ENCODE measurements at regions of chr15 and their contacts with region 1.

Region 1: GRCh38 chr15:45705510-45706473 is 71.0 kb downstream of the SQOR start:
- DNase-seq: peak; percentile 66
- H3K4me3 ChIP-seq: peak overlapping the region; percentile 50
- H3K27ac ChIP-seq: no peak overlapping the region
- H3K27me3 ChIP-seq: no peaks in the 10 kb centered on the region
- CTCF ChIP-seq: peak; percentile 88

Region 2: DNA sequence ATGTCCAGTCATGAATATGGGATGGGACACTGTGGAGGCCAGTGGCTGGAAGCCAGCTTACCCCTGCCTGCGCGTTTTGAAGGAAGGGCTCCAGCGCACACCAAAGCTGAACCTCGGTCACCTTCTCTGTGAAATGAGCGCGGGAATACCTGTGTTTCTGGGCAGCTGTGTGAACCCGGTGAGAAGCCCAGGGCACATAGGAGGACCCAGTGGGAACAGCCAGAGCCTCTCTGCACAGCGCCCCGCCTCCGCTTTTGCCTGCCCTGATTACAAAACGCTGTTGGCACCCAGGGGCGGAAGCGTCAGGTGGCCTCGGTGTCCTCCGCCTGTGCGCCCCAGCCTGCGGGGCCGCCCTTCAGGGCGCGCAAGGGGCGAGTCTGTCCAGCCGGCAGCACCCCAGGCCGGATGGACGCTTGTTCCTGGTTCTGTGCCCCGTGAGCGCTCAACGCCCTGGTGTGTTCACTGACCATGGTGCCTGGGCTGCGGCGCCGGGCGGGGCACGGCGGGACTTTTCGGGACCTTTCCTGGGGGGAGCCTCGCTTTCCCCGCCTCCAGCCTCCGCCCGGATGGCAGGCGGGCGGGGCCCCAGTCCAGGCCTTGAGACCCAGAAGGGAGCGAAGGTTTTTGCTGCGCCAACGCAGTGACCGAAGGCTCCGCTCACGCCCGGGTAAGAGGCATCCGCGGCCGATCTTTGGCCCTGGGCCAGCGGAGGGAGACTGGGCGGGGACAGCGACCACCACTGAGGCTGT is 71.2 kb before region 1 on chr15 and contains the start of gene SQOR:
- CTCF ChIA-PET with region 1: interaction called, 78 read pairs
- POLR2A ChIA-PET with region 1: interaction called, 6 read pairs
- DNase-seq: no peak
- H3K4me3 ChIP-seq: peak within 1 kb of the TSS; percentile 76
- H3K27ac ChIP-seq: peak within 1 kb of the TSS; percentile 70
- H3K27me3 ChIP-seq: no peaks in the 10 kb centered on the region
- CTCF ChIP-seq: no peak
- polyA plus RNA-seq, gene SQOR: 74.3 and 74.4 TPM in 2 replicates

Region 3: GRCh38 chr15:45670091-45670490 is 35.7 kb before region 1 on chr15:
- CTCF ChIA-PET with region 1: interaction called, 17 read pairs
- POLR2A ChIA-PET with region 1: interaction called, 4 read pairs
- DNase-seq: no peak
- H3K4me3 ChIP-seq: no peak overlapping the region
- H3K27ac ChIP-seq: peak overlapping the region; percentile 12
- H3K27me3 ChIP-seq: no peaks in the 10 kb centered on the region
- CTCF ChIP-seq: no peak

Region 4: DNA sequence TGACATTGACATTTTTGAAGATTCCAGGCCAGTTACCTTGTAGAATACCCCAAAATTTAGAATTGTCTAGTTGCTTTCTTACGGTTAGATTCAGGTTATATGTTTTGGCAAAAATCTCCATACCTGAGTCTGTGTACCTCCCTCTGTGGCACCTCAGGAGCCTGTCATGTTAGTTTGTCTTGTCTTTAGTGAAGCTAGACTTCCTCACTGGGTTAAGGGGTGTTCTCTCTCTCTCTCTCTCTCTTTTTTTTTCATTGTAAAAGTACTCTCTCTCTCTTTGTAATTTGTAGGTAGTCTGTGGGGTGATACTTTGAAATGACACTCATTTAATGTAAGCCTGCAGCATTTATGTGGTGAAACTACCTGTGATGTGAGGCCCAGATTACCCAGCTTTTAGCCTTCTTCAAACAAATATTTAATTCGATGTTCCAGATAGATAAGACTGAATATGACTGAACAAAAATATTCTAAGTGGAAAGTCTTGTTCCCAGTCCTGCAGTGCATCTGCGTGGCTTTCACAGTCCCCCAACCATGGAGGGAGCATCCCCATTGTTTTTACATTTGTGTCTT is 21.3 kb before region 1 on chr15:
- CTCF ChIA-PET with region 1: interaction called, 66 read pairs
- POLR2A ChIA-PET with region 1: no interaction called
- DNase-seq: no peak
- H3K4me3 ChIP-seq: no peak overlapping the region
- H3K27ac ChIP-seq: no peak overlapping the region
- H3K27me3 ChIP-seq: no peaks in the 10 kb centered on the region
- CTCF ChIP-seq: no peak

Region 5: DNA sequence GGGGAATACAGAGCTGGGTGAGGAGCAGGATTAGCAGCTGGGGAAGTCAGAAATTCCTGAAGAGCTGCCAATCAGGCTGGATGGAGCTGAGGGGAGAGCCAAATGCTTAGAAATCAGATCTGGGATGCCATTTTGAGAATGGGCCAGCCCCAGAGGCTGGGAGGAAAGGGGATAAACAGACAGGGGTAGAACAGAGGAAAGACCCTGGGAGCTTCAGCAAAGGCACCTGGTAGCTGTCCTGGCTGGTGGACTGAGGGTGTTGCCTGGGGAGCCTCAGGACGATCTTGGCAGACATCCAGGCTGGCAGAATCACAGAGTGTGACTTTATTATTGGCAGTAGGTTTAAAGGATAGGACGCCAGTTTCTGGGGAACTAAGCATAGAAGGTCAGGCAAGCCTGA is 26.9 kb after region 1 on chr15:
- CTCF ChIA-PET with region 1: interaction called, 12 read pairs
- POLR2A ChIA-PET with region 1: no interaction called
- DNase-seq: no peak
- H3K4me3 ChIP-seq: no peak overlapping the region
- H3K27ac ChIP-seq: no peak overlapping the region
- H3K27me3 ChIP-seq: no peaks in the 10 kb centered on the region
- CTCF ChIP-seq: no peak

Region 6: DNA sequence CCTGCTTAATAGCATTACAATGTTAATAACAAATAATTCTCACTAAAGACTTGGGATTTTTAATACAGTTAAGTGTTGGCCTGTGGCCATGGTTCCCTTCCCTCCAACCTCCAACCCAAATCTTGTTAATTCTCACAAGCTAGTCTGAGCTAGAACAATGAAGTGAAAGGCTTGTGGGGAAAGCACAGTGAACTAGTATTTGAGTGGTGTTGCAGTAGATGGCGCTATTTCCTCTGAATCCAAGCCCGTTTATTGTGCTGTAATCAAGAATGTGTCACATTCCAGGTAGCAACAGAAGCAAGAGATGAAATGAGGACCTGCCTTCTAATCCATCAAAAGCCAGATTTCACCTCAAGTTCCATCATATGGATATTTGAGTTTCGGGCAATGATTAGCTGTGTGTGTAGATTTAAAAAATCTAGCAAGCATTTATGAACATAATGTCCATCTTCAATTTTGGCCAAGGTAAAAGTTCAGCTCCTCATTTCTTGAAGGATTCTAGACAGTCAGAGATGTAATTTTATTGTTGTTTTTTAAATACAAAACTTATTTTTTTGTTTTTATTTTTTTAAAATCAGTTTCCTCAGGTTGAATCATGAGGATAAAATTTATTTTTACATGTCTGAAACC is 89.8 kb after region 1 on chr15:
- CTCF ChIA-PET with region 1: interaction called, 50 read pairs
- POLR2A ChIA-PET with region 1: no interaction called
- DNase-seq: no peak
- H3K4me3 ChIP-seq: no peak overlapping the region
- H3K27ac ChIP-seq: no peak overlapping the region
- H3K27me3 ChIP-seq: no peaks in the 10 kb centered on the region
- CTCF ChIP-seq: peak; percentile 49

Region 7: DNA sequence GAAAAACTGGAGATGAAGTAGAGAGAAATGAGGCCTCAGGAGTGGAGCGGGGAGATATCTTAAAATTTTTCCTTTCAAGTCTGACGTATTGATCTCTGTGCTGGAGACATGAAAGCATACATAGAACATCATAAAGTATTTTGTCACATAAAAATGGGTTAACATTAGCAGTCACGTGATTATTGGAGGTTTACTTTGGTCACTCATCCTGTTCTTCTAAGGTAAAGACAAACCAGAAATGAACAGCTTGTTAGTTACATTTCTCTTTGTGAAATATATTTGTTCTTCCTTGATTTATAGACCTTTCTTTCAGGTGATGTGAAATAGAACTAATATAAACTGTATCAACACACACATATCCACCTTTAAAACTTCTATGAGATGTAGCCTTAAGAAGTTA is 253.1 kb after region 1 on chr15:
- CTCF ChIA-PET with region 1: no interaction called
- POLR2A ChIA-PET with region 1: no interaction called
- DNase-seq: no peak
- H3K4me3 ChIP-seq: no peak overlapping the region
- H3K27ac ChIP-seq: no peak overlapping the region
- H3K27me3 ChIP-seq: no peaks in the 10 kb centered on the region
- CTCF ChIP-seq: no peak